ENCODE measurements at regions of chr1 and their contacts with region 1.

Region 1: DNA sequence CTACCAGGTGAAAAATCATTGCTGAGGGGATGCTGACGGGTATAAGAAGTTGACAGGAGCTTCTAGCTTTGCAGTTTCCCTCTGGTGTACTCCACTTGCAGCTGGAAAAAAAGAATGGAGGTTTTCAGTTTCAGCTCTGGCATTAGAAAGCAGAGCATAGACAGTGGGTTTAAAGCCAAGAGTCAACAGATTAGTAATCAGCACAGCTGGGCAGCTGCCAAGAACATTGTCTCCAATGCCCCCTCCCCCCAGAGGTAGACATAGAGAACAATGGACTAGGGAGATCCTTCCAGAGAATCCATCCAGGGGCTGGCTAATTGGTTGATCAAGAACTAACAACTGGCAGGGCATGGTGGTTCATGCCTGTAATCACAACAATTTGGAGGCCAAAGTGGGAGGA is 10.1 kb upstream of the ZBTB8B start:
- DNase-seq: peak; percentile 15
- H3K4me3 ChIP-seq: no peak overlapping the region
- H3K27ac ChIP-seq: no peak overlapping the region
- H3K4me1 ChIP-seq: no peaks in the 10 kb centered on the region
- H3K27me3 ChIP-seq: no peaks in the 10 kb centered on the region
- CTCF ChIP-seq: no peak
- POLR2A ChIP-seq: no peak

Region 2: GRCh38 chr1:32619701-32620485 is 165.2 kb after region 1 on chr1:
- intact Hi-C with region 1: loop called (anchors 10 kb)
- DNase-seq: no peak
- H3K4me3 ChIP-seq: no peak overlapping the region
- H3K27ac ChIP-seq: no peak overlapping the region
- H3K4me1 ChIP-seq: no peaks in the 10 kb centered on the region
- H3K27me3 ChIP-seq: no peaks in the 10 kb centered on the region
- CTCF ChIP-seq: peak in 1 of 4 experiments; percentile 31
- POLR2A ChIP-seq: no peak